ENCODE measurements at regions of chr16 and their contacts with region 1.

Region 1: GRCh38 chr16:21626659-21627277 is 25.6 kb downstream of the IGSF6 start:
- DNase-seq: no peak
- H3K4me3 Mint-ChIP-seq: peak overlapping the region; percentile 45
- H3K27ac Mint-ChIP-seq: peak overlapping the region; percentile 51
- H3K4me1 Mint-ChIP-seq: peaks cover 24% of the 10 kb centered on the region
- H3K27me3 Mint-ChIP-seq: no peaks in the 10 kb centered on the region

Region 2: GRCh38 chr16:21023509-21024202 is 603.1 kb before region 1 on chr16:
- intact Hi-C with region 1: no loop called
- DNase-seq: no peak
- H3K4me3 Mint-ChIP-seq: no peak overlapping the region
- H3K27ac Mint-ChIP-seq: peak overlapping the region; percentile 47
- H3K4me1 Mint-ChIP-seq: peaks cover 16% of the 10 kb centered on the region
- H3K27me3 Mint-ChIP-seq: peaks cover 3% of the 10 kb centered on the region

Region 3: GRCh38 chr16:21608639-21609328 is 18.0 kb before region 1 on chr16:
- intact Hi-C with region 1: loop called (anchors 2 kb)
- DNase-seq: peak; percentile 17
- H3K4me3 Mint-ChIP-seq: peak overlapping the region; percentile 33
- H3K27ac Mint-ChIP-seq: no peak overlapping the region
- H3K4me1 Mint-ChIP-seq: peaks cover 50% of the 10 kb centered on the region
- H3K27me3 Mint-ChIP-seq: no peaks in the 10 kb centered on the region